ENCODE measurements at regions of chr21 and their contacts with region 1.

Region 1: GRCh38 chr21:36437745-36438128 is 42.2 kb downstream of the CLDN14 start:
- DNase-seq: peak; percentile 40
- H3K4me3 ChIP-seq: no peak overlapping the region
- H3K27me3 ChIP-seq: no peaks in the 10 kb centered on the region
- CTCF ChIP-seq: no peak

Region 2: DNA sequence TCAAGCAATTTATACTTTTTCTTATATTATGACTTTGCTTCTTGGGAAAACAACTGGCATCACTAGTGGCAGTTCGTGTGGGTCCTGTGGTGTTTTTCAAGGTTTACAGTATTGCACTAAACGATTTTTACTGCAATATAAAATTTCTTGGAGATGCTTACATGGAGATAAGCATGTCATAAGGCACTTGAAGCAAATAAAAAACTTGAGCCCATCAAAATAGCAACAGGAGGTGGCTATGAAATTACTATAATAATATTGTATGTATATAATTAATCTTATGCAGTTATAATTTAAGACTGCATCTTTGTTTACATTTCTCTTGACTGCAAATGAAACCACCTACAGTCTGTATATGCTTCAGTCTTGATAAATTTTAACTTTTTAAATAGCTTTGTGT is 81.9 kb before region 1 on chr21:
- CTCF ChIA-PET with region 1: no interaction called
- POLR2A ChIA-PET with region 1: interaction called, 10 read pairs
- DNase-seq: no peak
- H3K4me3 ChIP-seq: no peak overlapping the region
- H3K27me3 ChIP-seq: no peaks in the 10 kb centered on the region
- CTCF ChIP-seq: no peak

Region 3: GRCh38 chr21:36487641-36488307 is 50.0 kb after region 1 on chr21:
- CTCF ChIA-PET with region 1: no interaction called
- POLR2A ChIA-PET with region 1: no interaction called
- DNase-seq: no peak
- H3K4me3 ChIP-seq: no peak overlapping the region
- H3K27me3 ChIP-seq: no peaks in the 10 kb centered on the region
- CTCF ChIP-seq: no peak